Ovary (tissue), 10 donors: ENCODE measurements at regions of chr7 and their contacts with region 1.

Region 1: GRCh38 chr7:123871998-123872867 is 27.3 kb downstream of the HYAL4 start:
- DNase-seq: peak; percentile 30 to 43 (median 31)
- H3K4me3 ChIP-seq: no peak overlapping the region
- H3K27ac ChIP-seq: no peak overlapping the region
- H3K4me1 ChIP-seq: no peaks in the 10 kb centered on the region
- H3K27me3 ChIP-seq: no peaks in the 10 kb centered on the region
- CTCF ChIP-seq: peak in 2 of 3 donors; percentile 13 to 49
- EP300 ChIP-seq: no peak
- POLR2A ChIP-seq: no peak

Region 2: DNA sequence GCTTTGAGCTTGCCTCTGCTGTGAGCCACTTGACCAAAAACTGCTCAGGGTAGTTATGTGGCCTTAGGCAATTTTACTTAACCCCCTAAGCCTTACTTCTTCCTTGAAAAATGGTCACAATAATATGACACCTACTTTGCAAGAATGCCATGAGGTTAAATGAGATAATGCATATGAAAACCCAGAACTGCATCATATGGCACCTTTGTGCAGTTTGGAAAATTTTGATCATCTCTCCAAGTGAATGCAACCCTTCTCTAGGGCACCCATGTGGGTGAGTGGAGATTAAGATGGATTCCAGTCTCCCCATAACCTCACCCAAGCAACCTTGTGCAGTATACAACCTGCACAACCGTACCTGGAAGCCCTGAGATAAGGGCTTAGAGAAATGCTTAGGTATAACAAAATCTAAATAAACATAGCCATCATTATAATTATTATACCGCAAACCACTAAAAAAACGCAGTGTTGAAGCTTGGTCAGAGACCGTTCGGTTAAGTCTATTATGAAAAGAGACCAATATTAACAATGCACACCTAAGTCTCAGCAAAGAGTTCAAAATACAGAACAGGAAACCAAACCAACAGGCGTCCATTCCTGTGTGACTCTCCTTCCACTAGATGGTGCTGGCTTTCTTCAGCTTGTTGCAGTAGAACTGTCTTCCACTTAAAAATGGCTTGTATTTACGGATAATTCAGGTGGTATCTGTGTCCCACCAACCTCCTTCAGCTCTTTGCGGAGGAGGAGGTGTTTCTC is 291.6 kb before region 1 on chr7:
- intact Hi-C with region 1: loop called in 1 of 4 experiments (anchors 5 kb)
- DNase-seq: peak in 1 of 5 donors; percentile 27
- H3K4me3 ChIP-seq: no peak overlapping the region
- H3K27ac ChIP-seq: no peak overlapping the region
- H3K4me1 ChIP-seq: no peaks in the 10 kb centered on the region
- H3K27me3 ChIP-seq: no peaks in the 10 kb centered on the region
- CTCF ChIP-seq: peak in 2 of 3 donors; percentile 30 to 50
- EP300 ChIP-seq: no peak
- POLR2A ChIP-seq: no peak

Region 3: DNA sequence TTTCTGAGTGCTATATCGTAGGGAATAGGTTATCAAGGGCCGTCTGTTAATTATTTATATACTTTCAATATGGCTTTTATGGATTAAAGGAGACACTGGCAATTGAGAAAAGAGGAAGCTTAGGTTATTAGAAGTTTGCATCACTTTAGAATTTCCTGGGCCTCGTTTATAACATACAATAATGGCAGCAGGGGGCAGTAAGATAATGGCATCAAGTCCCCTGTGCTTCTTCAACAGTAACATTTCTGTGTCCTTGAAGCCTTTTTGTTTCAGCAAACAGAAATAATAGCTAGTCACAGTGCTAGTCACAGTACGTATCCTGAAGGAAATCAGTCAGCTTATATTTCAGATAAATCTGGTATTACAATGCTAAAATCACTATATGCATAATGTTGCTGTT is 94.7 kb after region 1 on chr7:
- intact Hi-C with region 1: no loop called
- DNase-seq: no peak
- H3K4me3 ChIP-seq: no peak overlapping the region
- H3K27ac ChIP-seq: no peak overlapping the region
- H3K4me1 ChIP-seq: no peaks in the 10 kb centered on the region
- H3K27me3 ChIP-seq: no peaks in the 10 kb centered on the region
- CTCF ChIP-seq: no peak
- EP300 ChIP-seq: no peak
- POLR2A ChIP-seq: no peak